Activated CD4-positive, alpha-beta T cell treated with anti-CD3 and anti-CD28 coated beads, Interleukin-2, amount 10 ng/mL, durations not matched to agents 24 days and 14 days (primary cell): ENCODE measurements at regions of chr12 and their contacts with region 1.

Region 1: GRCh38 chr12:50174971-50175715 is 8.0 kb upstream of the CERS5 start:
- DNase-seq: peak; percentile 79
- H3K4me3 Mint-ChIP-seq: no peak overlapping the region
- H3K27ac Mint-ChIP-seq: no peak overlapping the region
- H3K4me1 Mint-ChIP-seq: peaks cover 1% of the 10 kb centered on the region
- H3K27me3 Mint-ChIP-seq: no peaks in the 10 kb centered on the region

Region 2: DNA sequence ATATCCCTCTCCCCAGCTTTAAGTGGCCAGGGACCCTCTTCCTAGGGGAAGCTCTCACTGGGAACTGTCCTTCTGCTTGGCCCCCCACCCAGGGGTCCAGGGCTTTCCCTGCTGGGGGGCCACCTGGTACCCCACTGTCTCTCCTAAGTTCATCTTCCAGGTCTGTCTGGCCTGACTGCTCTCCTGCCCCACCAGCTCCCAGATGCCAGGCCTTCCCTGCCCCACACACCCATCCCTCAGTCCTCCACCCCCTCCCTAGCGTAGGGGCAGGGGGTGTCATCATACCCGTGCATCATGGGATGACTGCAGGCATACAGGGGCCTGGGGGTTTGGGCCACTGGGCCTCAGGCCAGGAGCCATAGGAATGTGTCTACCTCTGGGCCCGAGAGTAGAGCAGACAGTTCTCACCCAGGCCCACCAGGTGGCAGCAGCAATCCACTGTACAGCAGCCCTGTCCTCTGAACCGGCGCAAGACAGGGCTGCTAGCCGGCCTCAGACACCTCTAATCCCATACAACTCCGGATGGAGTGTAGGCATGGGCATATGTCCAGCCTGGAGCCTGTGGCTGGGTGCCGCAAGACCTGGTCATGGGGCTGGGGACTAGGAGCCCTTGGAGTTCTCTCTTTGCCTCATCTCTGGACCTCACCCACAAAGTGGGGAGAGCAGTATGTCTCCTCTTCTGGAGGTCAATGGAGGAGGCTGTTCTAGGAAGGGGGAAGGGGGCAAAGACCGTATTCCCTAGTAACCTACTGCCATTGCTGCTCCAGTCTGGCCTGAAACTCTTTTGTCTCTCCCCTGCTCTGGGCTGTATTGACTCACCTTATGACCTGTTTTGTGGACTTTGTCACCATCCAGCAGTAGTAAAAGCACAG is 100.0 kb before region 1 on chr12:
- intact Hi-C with region 1: loop called (anchors 1 kb)
- DNase-seq: peak; percentile 94
- H3K4me3 Mint-ChIP-seq: no peak overlapping the region
- H3K27ac Mint-ChIP-seq: peak overlapping the region; percentile 41
- H3K4me1 Mint-ChIP-seq: peaks cover 13% of the 10 kb centered on the region
- H3K27me3 Mint-ChIP-seq: no peaks in the 10 kb centered on the region

Region 3: DNA sequence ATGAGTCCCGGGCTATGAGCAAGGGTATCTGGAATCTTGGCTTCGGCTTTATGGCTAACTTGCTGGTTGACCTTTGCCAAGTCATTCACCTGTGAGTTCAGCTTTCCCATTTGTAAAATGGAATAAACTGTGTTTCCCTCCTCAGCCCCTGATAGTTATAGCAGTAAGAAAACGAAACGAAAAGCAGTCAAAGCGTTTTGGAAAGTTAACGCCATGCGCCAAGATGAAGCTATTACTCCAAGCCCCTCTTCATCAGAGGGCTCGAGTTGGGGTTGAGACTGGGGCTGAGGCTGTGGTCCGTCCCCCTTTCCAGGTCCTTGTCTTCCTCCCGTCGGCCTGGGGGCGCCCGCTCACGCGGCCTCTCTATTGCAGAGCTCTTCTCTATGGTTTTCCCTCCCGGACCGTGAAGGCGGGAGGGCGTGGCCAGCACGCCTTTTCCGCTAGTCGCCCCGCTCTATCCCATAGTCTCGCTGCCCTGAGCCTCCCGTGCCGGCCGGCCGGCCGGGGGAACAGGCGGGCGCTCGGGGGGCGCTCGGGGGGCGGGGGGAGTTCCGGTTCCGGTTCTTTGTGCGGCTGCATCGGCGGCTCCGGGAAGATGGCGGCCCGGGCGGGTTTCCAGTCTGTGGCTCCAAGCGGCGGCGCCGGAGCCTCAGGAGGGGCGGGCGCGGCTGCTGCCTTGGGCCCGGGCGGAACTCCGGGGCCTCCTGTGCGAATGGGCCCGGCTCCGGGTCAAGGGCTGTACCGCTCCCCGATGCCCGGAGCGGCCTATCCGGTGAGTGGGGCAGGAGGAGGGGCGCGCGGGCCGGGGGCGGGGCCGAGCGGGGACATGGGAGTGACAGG is 90.1 kb before region 1 on chr12 and contains the start of gene SMARCD1:
- intact Hi-C with region 1: loop called (anchors 2 kb)
- DNase-seq: peak; percentile 94
- H3K4me3 Mint-ChIP-seq: peak within 1 kb of the TSS; percentile 93
- H3K27ac Mint-ChIP-seq: peak within 1 kb of the TSS; percentile 95
- H3K4me1 Mint-ChIP-seq: peaks cover 30% of the 10 kb centered on the region
- H3K27me3 Mint-ChIP-seq: no peaks in the 10 kb centered on the region
- total RNA-seq, gene SMARCD1: 73.1 and 82.5 TPM in 2 replicates

Region 4: GRCh38 chr12:50132505-50133135 is 42.5 kb before region 1 on chr12:
- intact Hi-C with region 1: loop called (anchors 1 kb)
- DNase-seq: peak; percentile 72
- H3K4me3 Mint-ChIP-seq: no peak overlapping the region
- H3K27ac Mint-ChIP-seq: peak overlapping the region; percentile 59
- H3K4me1 Mint-ChIP-seq: peaks cover 4% of the 10 kb centered on the region
- H3K27me3 Mint-ChIP-seq: no peaks in the 10 kb centered on the region